ENCODE measurements at regions of chr2 and their contacts with region 1.

Region 1: DNA sequence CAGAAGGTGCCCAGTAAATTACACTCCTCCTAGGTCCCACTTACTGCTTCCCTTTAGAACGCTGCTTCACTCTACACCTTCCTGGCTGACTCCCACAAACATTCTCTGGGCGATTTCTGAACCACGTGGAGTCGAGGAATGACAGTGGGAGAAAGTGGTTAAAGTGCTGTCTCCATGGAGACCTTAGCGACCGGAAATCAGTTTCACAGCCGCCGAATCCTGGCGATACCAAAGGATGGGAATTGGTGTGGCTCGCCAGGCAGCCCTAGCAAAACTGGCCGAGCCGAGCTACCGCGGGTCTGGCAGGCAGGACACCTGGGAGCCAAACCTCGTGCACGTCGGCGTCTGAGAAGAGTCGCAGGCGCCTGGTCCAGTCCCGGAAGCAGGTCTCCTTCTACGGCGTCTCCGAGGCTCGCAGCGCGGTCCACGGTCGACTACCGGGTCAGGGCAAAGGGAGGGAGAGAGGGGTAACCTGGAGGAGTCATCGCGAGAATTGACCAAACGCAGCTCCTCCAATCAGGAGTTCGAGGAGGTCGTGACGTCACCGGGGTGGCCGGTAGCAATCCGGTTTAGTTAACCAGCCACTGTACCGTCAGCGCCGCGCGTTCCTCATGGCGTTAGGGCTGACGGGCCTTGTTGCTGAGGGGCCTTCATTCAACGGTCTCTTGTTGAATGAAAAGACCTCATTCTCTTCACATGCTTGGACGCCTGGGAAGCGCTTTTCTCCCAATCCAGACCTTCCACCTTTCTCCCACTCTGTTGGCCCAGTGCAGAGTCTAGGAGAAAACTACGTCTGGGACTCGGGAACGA is at the start of gene THADA:
- DNase-seq: peak; percentile 83 to 94 (median 91)
- ATAC-seq: peak; percentile 98
- H3K4me3 ChIP-seq: peak within 1 kb of the TSS; percentile 79
- H3K4me3 Mint-ChIP-seq: peak within 1 kb of the TSS; percentile 82 to 96 (median 94)
- H3K27ac ChIP-seq: peak within 1 kb of the TSS; percentile 87
- H3K27ac Mint-ChIP-seq: peak within 1 kb of the TSS; percentile 90 to 98 (median 97)
- H3K4me1 ChIP-seq: peaks cover 9 to 13% of the 10 kb centered on the region in 2 donors
- H3K4me1 Mint-ChIP-seq: peaks cover 23 to 48% (median 38%) of the 10 kb centered on the region in 7 donors
- H3K27me3 ChIP-seq: no peaks in the 10 kb centered on the region
- H3K27me3 Mint-ChIP-seq: peaks cover 0 to 6% (median 3%) of the 10 kb centered on the region in 5 donors
- total RNA-seq, gene THADA: 34.1 to 43.0 (median 41.0) TPM

Region 2: DNA sequence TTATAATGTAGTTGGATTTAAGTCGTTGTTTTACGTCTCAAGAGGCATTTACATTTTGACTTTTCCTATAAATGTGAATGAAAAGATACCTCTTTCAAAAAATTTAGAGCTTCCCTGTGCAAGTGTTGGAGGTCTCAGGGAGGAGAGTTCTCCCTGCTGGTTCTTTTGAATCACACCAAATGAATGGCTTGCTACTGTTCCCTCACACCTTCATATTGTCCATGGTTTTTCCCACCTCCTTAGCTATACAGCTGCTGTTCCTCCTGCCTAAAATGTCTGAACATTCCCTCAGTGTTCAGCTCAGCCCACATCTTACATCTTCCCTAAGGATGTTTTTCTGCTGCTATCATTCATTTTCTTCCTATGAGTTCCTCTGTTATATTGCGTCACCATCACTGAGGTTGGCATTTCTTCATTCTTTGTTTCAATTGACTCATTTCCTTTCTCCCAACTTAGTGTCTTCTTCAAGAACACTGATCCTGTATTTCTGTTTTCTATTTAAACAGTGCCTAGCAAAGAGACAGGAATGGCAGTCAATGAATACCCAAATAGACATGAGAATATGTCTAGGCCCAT is 1280.8 kb before region 1 on chr2:
- CTCF ChIA-PET with region 1: no interaction called
- POLR2A ChIA-PET with region 1: no interaction called
- intact Hi-C with region 1: no loop called
- DNase-seq: no peak
- ATAC-seq: no peak
- H3K4me3 ChIP-seq: no peak overlapping the region
- H3K4me3 Mint-ChIP-seq: no peak overlapping the region
- H3K27ac ChIP-seq: no peak overlapping the region
- H3K27ac Mint-ChIP-seq: peak overlapping the region in 8 of 9 donors; percentile 9 to 81 (median 70)
- H3K4me1 ChIP-seq: peaks cover 0 to 3% of the 10 kb centered on the region in 2 donors
- H3K4me1 Mint-ChIP-seq: peaks cover 7 to 37% (median 26%) of the 10 kb centered on the region in 7 donors
- H3K27me3 ChIP-seq: no peaks in the 10 kb centered on the region
- H3K27me3 Mint-ChIP-seq: no peaks in the 10 kb centered on the region

Region 3: DNA sequence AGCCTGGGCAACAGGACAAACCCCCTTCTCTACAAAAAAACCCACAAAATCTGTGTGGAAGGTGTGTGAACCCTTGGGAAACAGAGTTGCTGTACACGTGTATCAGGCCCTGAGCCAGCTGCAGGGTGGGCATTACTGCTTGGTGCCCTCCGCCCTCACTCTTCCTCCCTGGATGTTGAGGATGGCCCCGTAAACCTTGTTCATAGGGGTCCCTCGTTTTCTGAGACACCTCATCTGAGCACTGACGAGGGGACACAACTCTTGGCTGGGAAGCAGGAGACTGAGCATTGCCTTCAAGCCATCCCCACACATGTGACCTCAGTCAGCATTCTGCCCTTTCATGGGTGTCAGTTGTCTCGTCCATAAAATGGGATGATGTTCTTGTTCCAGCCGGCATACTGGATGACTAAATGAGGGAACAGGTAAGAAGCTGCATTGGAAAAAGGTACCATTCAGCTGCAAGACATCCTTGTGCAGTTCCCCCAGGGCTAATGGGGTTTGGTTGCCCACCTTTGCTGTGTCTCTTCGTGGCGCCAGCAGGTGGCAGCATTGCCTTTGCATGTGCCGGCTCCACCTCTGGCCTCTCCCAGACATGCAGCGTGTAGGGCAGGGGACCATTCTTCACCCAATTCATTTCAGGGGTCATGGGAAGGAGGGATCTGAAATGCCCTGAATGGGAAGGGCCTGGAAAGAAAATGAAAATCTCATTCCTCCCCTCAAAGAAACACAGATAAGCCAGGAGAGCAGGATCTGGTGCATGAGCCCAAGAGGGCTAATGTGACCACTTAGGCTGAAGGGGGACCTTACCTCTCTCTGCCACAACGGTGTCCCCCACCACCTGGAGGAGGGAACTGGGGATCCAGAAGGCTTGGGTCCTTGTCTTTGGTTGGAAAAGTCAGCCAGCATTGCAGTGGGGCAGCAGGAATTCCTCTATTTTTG is 767.1 kb before region 1 on chr2:
- CTCF ChIA-PET with region 1: no interaction called
- POLR2A ChIA-PET with region 1: no interaction called
- intact Hi-C with region 1: loop called in 1 of 2 experiments (anchors 5 kb)
- DNase-seq: peak; percentile 44 to 69 (median 63)
- ATAC-seq: peak; percentile 93
- H3K4me3 ChIP-seq: no peak overlapping the region
- H3K4me3 Mint-ChIP-seq: peak overlapping the region in 6 of 10 donors; percentile 18 to 47 (median 21)
- H3K27ac ChIP-seq: no peak overlapping the region
- H3K27ac Mint-ChIP-seq: peak overlapping the region in 2 of 9 donors; percentile 21 to 25
- H3K4me1 ChIP-seq: peaks cover 3 to 6% of the 10 kb centered on the region in 2 donors
- H3K4me1 Mint-ChIP-seq: peaks cover 7 to 19% (median 14%) of the 10 kb centered on the region in 7 donors
- H3K27me3 ChIP-seq: no peaks in the 10 kb centered on the region
- H3K27me3 Mint-ChIP-seq: peaks cover 0 to 8% (median 5%) of the 10 kb centered on the region in 5 donors

Region 4: DNA sequence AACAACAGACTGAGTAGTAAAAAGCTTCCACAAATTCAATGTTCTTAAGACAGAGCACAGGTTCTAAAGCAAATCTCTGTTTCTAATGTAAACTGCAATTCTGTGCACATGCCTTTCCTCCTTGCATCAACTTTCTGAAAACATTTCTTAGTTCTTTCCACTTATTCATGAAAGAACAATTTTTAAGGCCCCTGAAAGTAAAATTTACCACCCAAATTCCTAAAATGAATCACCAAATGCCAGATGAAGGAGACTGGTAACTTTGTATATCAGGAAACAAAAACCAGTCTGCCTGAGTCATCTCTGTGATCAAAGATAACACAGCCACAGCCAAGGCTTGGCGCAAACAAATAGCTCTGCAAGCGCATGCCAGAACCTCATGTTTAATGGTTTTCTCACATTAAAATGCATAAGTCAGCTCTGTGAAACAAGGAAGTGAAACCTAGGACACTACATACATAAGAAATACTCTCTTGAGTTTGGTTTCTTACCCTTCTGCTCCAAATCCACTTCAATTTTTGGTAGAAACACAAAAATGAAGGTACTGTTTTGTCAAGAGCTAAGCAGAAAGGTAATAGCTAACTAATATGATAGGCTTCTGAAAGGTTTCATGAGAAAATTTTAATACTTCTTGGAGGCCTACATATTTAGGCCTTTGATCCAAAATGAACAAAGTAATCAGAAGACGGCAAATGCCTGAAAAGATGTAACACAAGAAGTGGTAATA is 169.3 kb before region 1 on chr2:
- CTCF ChIA-PET with region 1: no interaction called
- POLR2A ChIA-PET with region 1: no interaction called
- intact Hi-C with region 1: loop called in 1 of 2 experiments (anchors 1 kb)
- DNase-seq: peak in 5 of 9 donors; percentile 4 to 56 (median 17)
- ATAC-seq: peak; percentile 94
- H3K4me3 ChIP-seq: no peak overlapping the region
- H3K4me3 Mint-ChIP-seq: peak overlapping the region in 4 of 10 donors; percentile 3 to 66 (median 5)
- H3K27ac ChIP-seq: no peak overlapping the region
- H3K27ac Mint-ChIP-seq: peak overlapping the region in 5 of 9 donors; percentile 0 to 89 (median 85)
- H3K4me1 ChIP-seq: peaks cover 0 to 35% of the 10 kb centered on the region in 2 donors
- H3K4me1 Mint-ChIP-seq: peaks cover 8 to 43% (median 30%) of the 10 kb centered on the region in 7 donors
- H3K27me3 ChIP-seq: no peaks in the 10 kb centered on the region
- H3K27me3 Mint-ChIP-seq: peaks cover 0 to 6% (median 0%) of the 10 kb centered on the region in 5 donors

Region 5: DNA sequence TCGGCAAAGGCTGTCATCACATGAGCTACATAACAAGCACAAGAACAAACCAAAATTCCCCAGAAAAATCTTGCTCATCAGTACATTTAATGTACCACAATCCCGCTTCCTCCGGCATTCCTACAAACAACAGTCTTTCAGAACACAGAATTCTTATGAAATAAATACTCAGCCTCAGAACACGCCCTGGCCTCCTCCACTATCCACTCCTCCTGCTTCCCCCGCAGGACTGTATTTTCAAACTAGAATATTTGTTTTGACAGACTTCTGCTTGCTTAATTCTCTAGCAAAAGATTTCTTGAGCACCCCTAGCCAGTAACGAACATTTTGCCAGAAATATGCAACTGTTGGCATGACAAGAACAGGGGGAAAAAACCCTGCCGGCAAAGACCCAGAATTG is 131.2 kb before region 1 on chr2:
- CTCF ChIA-PET with region 1: no interaction called
- POLR2A ChIA-PET with region 1: no interaction called
- intact Hi-C with region 1: no loop called
- DNase-seq: no peak
- ATAC-seq: no peak
- H3K4me3 ChIP-seq: no peak overlapping the region
- H3K4me3 Mint-ChIP-seq: no peak overlapping the region
- H3K27ac ChIP-seq: no peak overlapping the region
- H3K27ac Mint-ChIP-seq: no peak overlapping the region
- H3K4me1 ChIP-seq: no peaks in the 10 kb centered on the region
- H3K4me1 Mint-ChIP-seq: peaks cover 0 to 26% (median 11%) of the 10 kb centered on the region in 7 donors
- H3K27me3 ChIP-seq: no peaks in the 10 kb centered on the region
- H3K27me3 Mint-ChIP-seq: no peaks in the 10 kb centered on the region

Region 6: GRCh38 chr2:43531251-43531650 is 64.6 kb before region 1 on chr2:
- CTCF ChIA-PET with region 1: no interaction called
- POLR2A ChIA-PET with region 1: no interaction called
- intact Hi-C with region 1: no loop called
- DNase-seq: no peak
- ATAC-seq: no peak
- H3K4me3 ChIP-seq: no peak overlapping the region
- H3K4me3 Mint-ChIP-seq: no peak overlapping the region
- H3K27ac ChIP-seq: no peak overlapping the region
- H3K27ac Mint-ChIP-seq: no peak overlapping the region
- H3K4me1 ChIP-seq: no peaks in the 10 kb centered on the region
- H3K4me1 Mint-ChIP-seq: peaks cover 0 to 14% (median 0%) of the 10 kb centered on the region in 7 donors
- H3K27me3 ChIP-seq: no peaks in the 10 kb centered on the region
- H3K27me3 Mint-ChIP-seq: no peaks in the 10 kb centered on the region

Region 7: GRCh38 chr2:43637030-43637803 is 41.4 kb after region 1 on chr2 and contains the start of gene PLEKHH2:
- CTCF ChIA-PET with region 1: no interaction called
- POLR2A ChIA-PET with region 1: interaction called, 3 read pairs
- intact Hi-C with region 1: loop called in 1 of 2 experiments (anchors 1 kb)
- DNase-seq: peak; percentile 69 to 89 (median 84)
- ATAC-seq: peak; percentile 100
- H3K4me3 ChIP-seq: peak within 1 kb of the TSS; percentile 93
- H3K4me3 Mint-ChIP-seq: peak within 1 kb of the TSS; percentile 87 to 100 (median 95)
- H3K27ac ChIP-seq: peak within 1 kb of the TSS; percentile 56
- H3K27ac Mint-ChIP-seq: peak within 1 kb of the TSS; percentile 10 to 90 (median 80)
- H3K4me1 ChIP-seq: peaks cover 0 to 10% of the 10 kb centered on the region in 2 donors
- H3K4me1 Mint-ChIP-seq: peaks cover 6 to 21% (median 19%) of the 10 kb centered on the region in 7 donors
- H3K27me3 ChIP-seq: peaks cover 0 to 4% of the 10 kb centered on the region in 2 donors
- H3K27me3 Mint-ChIP-seq: peaks cover 16 to 55% (median 28%) of the 10 kb centered on the region in 5 donors
- total RNA-seq, gene PLEKHH2: 0.02 to 2.8 (median 2.0) TPM

Region 8: DNA sequence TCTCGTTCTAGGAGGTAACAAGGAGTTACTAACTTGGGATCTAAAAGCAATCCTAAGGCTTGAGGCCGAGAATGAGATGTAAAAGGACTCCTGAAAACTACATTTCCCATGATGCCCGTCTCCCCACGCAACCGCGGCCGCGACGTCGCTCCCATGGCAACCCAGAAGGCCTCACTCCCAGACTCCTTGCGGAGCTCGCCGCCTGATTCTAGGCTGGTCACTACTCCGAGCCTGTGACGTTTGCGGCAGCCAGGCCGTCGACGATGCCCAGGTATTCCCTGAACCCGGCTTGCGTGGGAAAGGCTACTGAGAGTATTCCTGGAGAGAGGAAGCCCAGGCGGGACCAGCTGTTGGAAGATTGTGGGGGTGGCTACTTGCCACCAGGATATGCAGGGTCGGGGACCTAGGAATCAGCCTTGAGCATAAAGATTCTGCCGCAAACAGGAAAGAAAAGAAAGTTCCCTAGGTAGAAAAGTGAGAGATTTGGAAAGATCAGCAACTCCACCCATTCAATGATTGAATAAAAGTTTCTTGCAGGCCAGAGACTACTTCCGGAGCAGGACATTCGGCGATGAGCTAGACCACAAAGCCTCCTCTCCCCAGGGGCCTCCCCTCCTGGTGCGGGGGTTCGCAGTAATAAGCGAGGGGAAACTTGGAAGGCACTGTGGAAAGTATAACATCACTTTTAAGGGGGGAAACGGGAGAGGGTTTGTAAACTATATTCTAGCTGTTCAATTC is 178.2 kb after region 1 on chr2 and contains the start of gene DYNC2LI1:
- CTCF ChIA-PET with region 1: no interaction called
- POLR2A ChIA-PET with region 1: no interaction called
- intact Hi-C with region 1: loop called (anchors 1 to 10 kb)
- DNase-seq: peak; percentile 44 to 81 (median 65)
- ATAC-seq: peak; percentile 97
- H3K4me3 ChIP-seq: peak within 1 kb of the TSS; percentile 75
- H3K4me3 Mint-ChIP-seq: peak within 1 kb of the TSS; percentile 92 to 99 (median 96)
- H3K27ac ChIP-seq: peak within 1 kb of the TSS; percentile 67
- H3K27ac Mint-ChIP-seq: peak within 1 kb of the TSS; percentile 35 to 93 (median 79)
- H3K4me1 ChIP-seq: no peaks in the 10 kb centered on the region
- H3K4me1 Mint-ChIP-seq: peaks cover 10 to 21% (median 13%) of the 10 kb centered on the region in 7 donors
- H3K27me3 ChIP-seq: no peaks in the 10 kb centered on the region
- H3K27me3 Mint-ChIP-seq: peaks cover 0 to 4% (median 0%) of the 10 kb centered on the region in 5 donors
- total RNA-seq, gene DYNC2LI1: 1.9 to 6.1 (median 5.1) TPM

Region 9: GRCh38 chr2:43995733-43996533 is 400.1 kb after region 1 on chr2 and contains the start of gene LRPPRC:
- CTCF ChIA-PET with region 1: no interaction called
- POLR2A ChIA-PET with region 1: no interaction called
- intact Hi-C with region 1: loop called (anchors 1 to 5 kb)
- DNase-seq: peak; percentile 69 to 95 (median 90)
- ATAC-seq: peak; percentile 98
- H3K4me3 ChIP-seq: peak within 1 kb of the TSS; percentile 98
- H3K4me3 Mint-ChIP-seq: peak within 1 kb of the TSS; percentile 89 to 99 (median 90)
- H3K27ac ChIP-seq: peak within 1 kb of the TSS; percentile 84
- H3K27ac Mint-ChIP-seq: peak within 1 kb of the TSS; percentile 95 to 100 (median 97)
- H3K4me1 ChIP-seq: peaks cover 9 to 25% of the 10 kb centered on the region in 2 donors
- H3K4me1 Mint-ChIP-seq: peaks cover 34 to 62% (median 52%) of the 10 kb centered on the region in 7 donors
- H3K27me3 ChIP-seq: no peaks in the 10 kb centered on the region
- H3K27me3 Mint-ChIP-seq: peaks cover 0 to 1% (median 0%) of the 10 kb centered on the region in 5 donors
- total RNA-seq, gene LRPPRC: 54.3 to 92.7 (median 71.2) TPM